Activated CD4-positive, alpha-beta memory T cell treated with anti-CD3 and anti-CD28 coated beads for 36 hours (primary cell): ENCODE measurements at regions of chr20 and their contacts with region 1.

Region 1: DNA sequence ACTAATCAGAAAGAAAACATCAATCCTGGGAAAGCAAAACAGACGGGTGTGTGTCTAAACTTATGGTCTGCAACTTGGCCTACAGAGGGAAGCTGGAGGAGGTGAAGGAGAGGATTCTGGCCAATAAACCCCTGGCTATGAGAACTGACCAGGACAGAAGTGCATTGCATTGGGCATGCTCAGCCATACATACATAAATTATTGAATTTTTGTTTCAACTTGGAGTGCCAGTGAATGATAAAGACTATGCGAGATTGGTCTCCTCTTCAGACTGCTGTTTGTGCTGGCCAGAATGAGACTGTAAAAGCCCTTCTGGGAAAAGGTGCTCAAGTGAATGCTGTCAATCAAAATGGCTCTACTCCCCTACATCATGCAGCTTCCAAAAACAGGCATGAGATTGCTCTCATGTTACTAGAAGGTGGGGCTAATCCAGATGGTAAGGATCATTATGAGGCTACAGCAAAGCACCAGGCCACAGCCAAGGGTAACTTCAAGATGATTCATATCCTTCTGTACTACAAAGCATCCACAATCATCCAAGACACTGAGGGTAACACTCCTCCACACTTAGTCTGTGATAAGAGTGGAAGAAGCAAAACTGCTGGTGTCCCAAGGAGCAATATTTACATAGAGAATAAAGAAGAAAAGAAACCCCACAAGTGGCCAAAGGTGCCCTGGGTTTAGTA is 17.4 kb downstream of the ADNP start:
- DNase-seq: peak; percentile 55
- H3K4me3 Mint-ChIP-seq: no peak overlapping the region
- H3K27ac Mint-ChIP-seq: peak overlapping the region; percentile 64
- H3K4me1 Mint-ChIP-seq: peaks cover 83% of the 10 kb centered on the region
- H3K27me3 Mint-ChIP-seq: no peaks in the 10 kb centered on the region

Region 2: DNA sequence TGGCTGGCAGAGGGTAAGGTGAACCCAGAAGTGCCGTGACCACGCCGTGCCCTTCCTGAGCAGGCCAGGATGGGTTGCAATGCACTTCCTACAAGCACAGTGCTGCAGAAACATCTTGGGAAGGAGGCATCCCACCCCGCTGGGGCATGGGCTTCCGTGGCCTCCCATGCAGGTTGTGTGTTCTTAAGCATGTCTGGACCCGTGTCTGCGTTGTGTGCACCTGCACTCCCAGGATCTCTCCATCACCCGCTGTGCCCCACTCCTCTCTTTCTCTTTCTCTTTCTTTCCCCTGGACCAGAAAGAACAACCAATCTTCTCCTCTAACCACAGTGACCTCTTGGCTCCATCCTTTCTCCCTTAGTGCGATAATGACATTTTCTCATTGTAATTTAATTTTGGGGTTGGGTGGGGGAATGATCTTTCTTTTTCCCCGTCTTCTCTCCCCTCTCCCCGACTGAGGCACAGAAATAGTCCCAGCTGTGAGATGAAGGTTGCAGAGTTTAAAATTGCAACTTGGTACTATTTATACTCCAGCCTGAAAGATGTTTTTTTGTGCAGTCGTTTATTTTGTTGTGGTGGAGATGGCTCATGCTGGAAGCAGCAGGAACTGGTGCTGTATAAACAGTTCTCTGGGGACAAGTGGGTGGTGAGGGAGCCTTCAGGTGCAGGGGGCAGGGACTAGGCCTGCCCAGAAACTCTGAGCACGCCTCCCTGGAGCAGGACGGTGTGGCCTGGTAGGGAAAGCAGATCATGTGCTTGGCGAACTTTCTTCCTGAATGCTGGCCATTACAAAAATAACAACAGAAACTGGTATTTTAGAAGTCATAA is 98.5 kb before region 1 on chr20:
- CTCF ChIA-PET with region 1: interaction called, 4 read pairs
- POLR2A ChIA-PET with region 1: no interaction called
- intact Hi-C with region 1: loop called (anchors 1 kb)
- DNase-seq: no peak
- H3K4me3 Mint-ChIP-seq: peak overlapping the region; percentile 7
- H3K27ac Mint-ChIP-seq: peak overlapping the region; percentile 2
- H3K4me1 Mint-ChIP-seq: peaks cover 15% of the 10 kb centered on the region
- H3K27me3 Mint-ChIP-seq: no peaks in the 10 kb centered on the region

Region 3: GRCh38 chr20:50891138-50891537 is 22.7 kb before region 1 on chr20:
- CTCF ChIA-PET with region 1: interaction called, 3 read pairs
- POLR2A ChIA-PET with region 1: no interaction called
- intact Hi-C with region 1: loop called (anchors 1 kb)
- DNase-seq: no peak
- H3K4me3 Mint-ChIP-seq: no peak overlapping the region
- H3K27ac Mint-ChIP-seq: peak overlapping the region; percentile 28
- H3K4me1 Mint-ChIP-seq: peaks cover 30% of the 10 kb centered on the region
- H3K27me3 Mint-ChIP-seq: no peaks in the 10 kb centered on the region